ENCODE measurements at regions of chr5 and their contacts with region 1.

Region 1: GRCh38 chr5:136058039-136058952 is 29.5 kb downstream of the TGFBI start:
- DNase-seq: peak; percentile 47 to 94
- H3K4me3 ChIP-seq: no peak overlapping the region
- H3K27ac ChIP-seq: peak overlapping the region; percentile 19 to 88 (median 79)
- H3K4me1 ChIP-seq: peaks cover 9 to 51% (median 32%) of the 10 kb centered on the region in 4 donors
- H3K27me3 ChIP-seq: no peaks in the 10 kb centered on the region
- CTCF ChIP-seq: peak in 1 of 7 experiments; percentile 11
- EP300 ChIP-seq: peak; percentile 83
- POLR2A ChIP-seq: no peak

Region 2: DNA sequence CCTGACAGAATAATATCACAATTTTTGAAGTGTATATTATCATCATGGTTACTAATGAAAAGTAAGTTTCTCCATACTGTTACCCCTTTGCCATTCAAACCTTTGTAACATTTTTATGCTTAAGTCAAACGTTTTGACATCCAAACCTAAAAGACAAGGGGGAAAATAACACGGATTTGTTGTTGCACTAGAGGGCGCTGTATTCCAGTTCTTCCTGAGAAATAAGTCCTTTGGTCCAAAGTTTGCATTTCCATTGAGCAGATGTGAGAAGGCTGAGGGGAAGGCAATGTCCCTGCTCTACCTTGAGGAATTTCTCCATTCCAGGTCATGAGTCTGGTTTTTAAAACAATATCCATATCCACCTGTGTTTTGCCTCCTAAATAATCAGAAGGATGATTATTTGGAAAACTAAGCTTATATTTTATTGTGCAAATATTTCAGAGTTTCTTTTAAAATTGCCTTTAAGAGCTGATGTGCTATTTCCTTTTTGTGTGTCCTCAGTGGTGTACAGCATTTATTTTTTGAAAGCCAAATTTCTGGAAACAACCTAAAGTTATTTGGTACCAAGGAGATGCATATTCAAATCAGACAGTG is 113.2 kb before region 1 on chr5:
- intact Hi-C with region 1: loop called (anchors 10 kb)
- DNase-seq: peak in 1 of 2 donors; percentile 91
- H3K4me3 ChIP-seq: no peak overlapping the region
- H3K27ac ChIP-seq: no peak overlapping the region
- H3K4me1 ChIP-seq: no peaks in the 10 kb centered on the region
- H3K27me3 ChIP-seq: peaks cover 0 to 4% (median 0%) of the 10 kb centered on the region in 3 donors
- CTCF ChIP-seq: peak in 5 of 7 experiments; percentile 53 to 81 (median 64)
- EP300 ChIP-seq: no peak
- POLR2A ChIP-seq: no peak

Measured in stomach (tissue), 19 donors.